Activated CD4-positive, alpha-beta memory T cell treated with anti-CD3 and anti-CD28 coated beads for 36 hours (primary cell): ENCODE measurements at regions of chr15 and their contacts with region 1.

Region 1: GRCh38 chr15:70140543-70141375 is 43.0 kb upstream of the TLE3 start:
- DNase-seq: peak; percentile 61
- H3K4me3 Mint-ChIP-seq: peak overlapping the region; percentile 7
- H3K27ac Mint-ChIP-seq: peak overlapping the region; percentile 38
- H3K4me1 Mint-ChIP-seq: peaks cover 34% of the 10 kb centered on the region
- H3K27me3 Mint-ChIP-seq: peaks cover 15% of the 10 kb centered on the region

Region 2: DNA sequence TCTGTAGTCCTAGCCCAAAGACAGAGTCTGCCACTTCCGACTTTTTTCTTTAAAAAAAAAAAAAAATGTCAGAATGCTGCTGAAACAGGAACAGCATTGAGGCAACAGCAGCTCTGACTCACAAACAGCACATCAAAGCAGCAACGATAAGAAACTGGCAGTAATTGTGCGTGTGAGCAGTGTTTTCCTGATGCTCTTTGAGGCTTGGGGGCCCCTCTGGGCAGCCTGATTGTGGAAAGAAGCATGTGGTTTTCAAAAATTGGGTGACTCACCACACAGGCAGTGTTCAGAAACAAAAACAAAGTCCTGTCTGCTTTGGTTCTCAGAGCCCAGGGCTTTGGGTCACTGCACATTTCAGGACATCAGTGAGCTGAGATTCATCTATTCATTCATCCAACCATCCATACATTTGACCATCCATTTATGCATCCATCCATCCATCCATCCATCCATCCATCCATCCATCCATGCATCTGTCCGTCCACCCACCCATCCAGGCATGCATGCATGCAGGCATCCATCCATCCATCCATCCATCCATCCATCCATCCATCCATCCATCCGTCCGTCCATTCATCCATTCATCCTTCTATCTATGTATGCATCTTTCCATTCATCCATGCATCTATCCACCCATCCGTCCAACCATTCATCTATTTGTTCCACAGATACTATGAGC is 379.7 kb before region 1 on chr15:
- CTCF ChIA-PET with region 1: no interaction called
- POLR2A ChIA-PET with region 1: interaction called, 4 read pairs
- intact Hi-C with region 1: loop called (anchors 2 kb)
- DNase-seq: peak; percentile 93
- H3K4me3 Mint-ChIP-seq: peak overlapping the region; percentile 41
- H3K27ac Mint-ChIP-seq: peak overlapping the region; percentile 89
- H3K4me1 Mint-ChIP-seq: peaks cover 73% of the 10 kb centered on the region
- H3K27me3 Mint-ChIP-seq: peaks cover 3% of the 10 kb centered on the region

Region 3: GRCh38 chr15:70259028-70259424 is 118.3 kb after region 1 on chr15:
- CTCF ChIA-PET with region 1: interaction called, 5 read pairs
- POLR2A ChIA-PET with region 1: no interaction called
- intact Hi-C with region 1: loop called (anchors 1 kb)
- DNase-seq: no peak
- H3K4me3 Mint-ChIP-seq: peak overlapping the region; percentile 48
- H3K27ac Mint-ChIP-seq: peak overlapping the region; percentile 63
- H3K4me1 Mint-ChIP-seq: peaks cover 40% of the 10 kb centered on the region
- H3K27me3 Mint-ChIP-seq: peaks cover 1% of the 10 kb centered on the region

Region 4: GRCh38 chr15:70299931-70300869 is 159.4 kb after region 1 on chr15:
- CTCF ChIA-PET with region 1: no interaction called
- POLR2A ChIA-PET with region 1: interaction called, 6 read pairs
- intact Hi-C with region 1: loop called (anchors 5 kb)
- DNase-seq: peak; percentile 90
- H3K4me3 Mint-ChIP-seq: no peak overlapping the region
- H3K27ac Mint-ChIP-seq: no peak overlapping the region
- H3K4me1 Mint-ChIP-seq: peaks cover 15% of the 10 kb centered on the region
- H3K27me3 Mint-ChIP-seq: no peaks in the 10 kb centered on the region

Region 5: GRCh38 chr15:70474471-70475396 is 334.0 kb after region 1 on chr15:
- CTCF ChIA-PET with region 1: no interaction called
- POLR2A ChIA-PET with region 1: no interaction called
- intact Hi-C with region 1: loop called (anchors 5 kb)
- DNase-seq: peak; percentile 51
- H3K4me3 Mint-ChIP-seq: no peak overlapping the region
- H3K27ac Mint-ChIP-seq: no peak overlapping the region
- H3K4me1 Mint-ChIP-seq: peaks cover 33% of the 10 kb centered on the region
- H3K27me3 Mint-ChIP-seq: peaks cover 41% of the 10 kb centered on the region